ENCODE measurements at regions of chr11 and their contacts with region 1.

Region 1: GRCh38 chr11:62841361-62842184 is 2.2 kb upstream of the WDR74 start:
- DNase-seq: peak; percentile 99
- ATAC-seq: peak; percentile 79
- H3K4me3 ChIP-seq: peak overlapping the region in 1 of 2 experiments; percentile 15; a peak in 2 of 4 replicates
- H3K27ac ChIP-seq: peak overlapping the region; percentile 94
- H3K4me1 ChIP-seq: peaks cover 8 to 36% of the 10 kb centered on the region in 2 experiments; a peak in 3 of 4 replicates
- H3K27me3 ChIP-seq: no peaks in the 10 kb centered on the region
- CTCF ChIP-seq: no peak
- POLR2A ChIP-seq: peak; percentile 100
- RAD21 ChIP-seq: no peak

Region 2: GRCh38 chr11:62394825-62395538 is 446.6 kb before region 1 on chr11:
- CTCF ChIA-PET with region 1: interaction called, 11 read pairs
- POLR2A ChIA-PET with region 1: interaction called, 19 read pairs
- RAD21 ChIA-PET with region 1: no interaction called
- intact Hi-C with region 1: no loop called
- DNase-seq: peak; percentile 61
- ATAC-seq: peak; percentile 82
- H3K4me3 ChIP-seq: no peak overlapping the region; a peak in 1 of 4 replicates
- H3K27ac ChIP-seq: no peak overlapping the region
- H3K4me1 ChIP-seq: peaks cover 9 to 21% of the 10 kb centered on the region in 2 experiments; a peak in 3 of 4 replicates
- H3K27me3 ChIP-seq: no peaks in the 10 kb centered on the region
- CTCF ChIP-seq: peak; percentile 58 to 85 (median 81)
- POLR2A ChIP-seq: no peak
- RAD21 ChIP-seq: peak; percentile 95

Region 3: GRCh38 chr11:62671575-62672389 is 169.8 kb before region 1 on chr11 and contains the starts of genes LBHD1 and UQCC3:
- CTCF ChIA-PET with region 1: no interaction called
- POLR2A ChIA-PET with region 1: interaction called, 21 read pairs
- RAD21 ChIA-PET with region 1: no interaction called
- intact Hi-C with region 1: no loop called
- DNase-seq: peak; percentile 79
- ATAC-seq: peak; percentile 62
- H3K4me3 ChIP-seq: peak within 1 kb of the TSS; percentile 96 to 97
- H3K27ac ChIP-seq: peak within 1 kb of the TSS; percentile 98
- H3K4me1 ChIP-seq: peaks cover 35 to 59% of the 10 kb centered on the region in 2 experiments
- H3K27me3 ChIP-seq: no peaks in the 10 kb centered on the region
- CTCF ChIP-seq: no peak
- POLR2A ChIP-seq: peak; percentile 63
- RAD21 ChIP-seq: no peak
- total RNA-seq, gene LBHD1: 14.7 TPM
- total RNA-seq, gene UQCC3: 17.9 TPM

Region 4: DNA sequence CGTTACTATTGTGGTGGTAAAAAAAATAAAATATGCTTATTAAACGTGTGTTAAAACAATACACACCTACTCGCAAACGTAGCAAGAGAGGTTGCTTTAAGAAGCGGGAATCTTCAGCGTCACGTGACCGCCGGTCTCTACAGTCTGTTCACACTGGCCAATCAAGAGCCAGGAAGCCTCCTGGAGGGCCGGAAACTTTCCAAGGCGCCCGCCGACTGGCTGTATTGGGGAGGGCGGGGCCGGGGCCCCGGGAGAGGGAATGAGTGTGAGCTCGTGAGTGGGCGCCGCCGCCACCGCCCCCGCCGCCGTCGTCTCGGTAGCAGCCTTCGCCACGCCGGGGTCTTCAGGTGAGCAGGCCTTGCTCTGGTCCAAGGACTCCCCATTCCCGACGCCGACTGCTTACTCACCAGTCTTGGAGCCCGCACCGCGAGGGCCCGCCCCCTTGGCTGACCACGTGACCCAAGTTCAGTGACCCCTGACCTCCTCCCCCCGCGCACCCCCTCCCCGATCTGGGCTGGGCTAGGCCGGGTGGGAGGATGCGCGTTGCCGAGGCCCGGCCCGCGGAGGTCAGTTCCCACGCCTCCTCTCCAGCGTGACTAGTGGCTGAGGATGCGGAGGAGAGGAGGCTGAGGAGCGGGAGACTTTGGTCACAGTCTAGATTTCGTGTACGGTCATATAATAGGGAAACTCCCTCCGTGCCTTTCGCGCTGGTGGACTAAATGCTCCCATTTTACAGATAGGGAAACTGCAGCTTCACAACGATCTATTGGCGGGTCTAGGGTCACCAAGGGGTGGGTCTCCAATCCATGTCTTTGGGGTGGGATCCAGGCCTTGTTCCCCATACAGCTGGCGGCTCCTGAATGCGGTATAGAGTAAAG is 70.2 kb before region 1 on chr11 and contains the start of gene TAF6L:
- CTCF ChIA-PET with region 1: no interaction called
- POLR2A ChIA-PET with region 1: interaction called, 13 read pairs
- RAD21 ChIA-PET with region 1: no interaction called
- intact Hi-C with region 1: no loop called
- DNase-seq: peak; percentile 93
- ATAC-seq: peak; percentile 94
- H3K4me3 ChIP-seq: peak within 1 kb of the TSS; percentile 67 to 69
- H3K27ac ChIP-seq: peak within 1 kb of the TSS; percentile 74
- H3K4me1 ChIP-seq: peaks cover 7 to 24% of the 10 kb centered on the region in 2 experiments; a peak in 3 of 4 replicates
- H3K27me3 ChIP-seq: no peaks in the 10 kb centered on the region
- CTCF ChIP-seq: no peak
- POLR2A ChIP-seq: peak; percentile 7
- RAD21 ChIP-seq: no peak
- total RNA-seq, gene TAF6L: 24.2 TPM

Region 5: GRCh38 chr11:62816557-62816956 is 25.0 kb before region 1 on chr11:
- CTCF ChIA-PET with region 1: no interaction called
- POLR2A ChIA-PET with region 1: interaction called, 12 read pairs
- RAD21 ChIA-PET with region 1: no interaction called
- intact Hi-C with region 1: no loop called
- DNase-seq: no peak
- ATAC-seq: no peak
- H3K4me3 ChIP-seq: no peak overlapping the region
- H3K27ac ChIP-seq: no peak overlapping the region
- H3K4me1 ChIP-seq: no peaks in the 10 kb centered on the region
- H3K27me3 ChIP-seq: no peaks in the 10 kb centered on the region
- CTCF ChIP-seq: no peak
- POLR2A ChIP-seq: no peak
- RAD21 ChIP-seq: no peak

Region 6: GRCh38 chr11:62880803-62881578 is 39.4 kb after region 1 on chr11 and contains the start of gene SLC3A2:
- CTCF ChIA-PET with region 1: interaction called, 3 read pairs
- POLR2A ChIA-PET with region 1: interaction called, 50 read pairs
- RAD21 ChIA-PET with region 1: interaction called, 4 to 7 read pairs
- intact Hi-C with region 1: no loop called
- DNase-seq: peak; percentile 68
- ATAC-seq: peak; percentile 87
- H3K4me3 ChIP-seq: peak within 1 kb of the TSS; percentile 75 to 85
- H3K27ac ChIP-seq: peak within 1 kb of the TSS; percentile 96
- H3K4me1 ChIP-seq: peaks cover 38 to 74% of the 10 kb centered on the region in 2 experiments
- H3K27me3 ChIP-seq: no peaks in the 10 kb centered on the region
- CTCF ChIP-seq: peak in 2 of 3 experiments; percentile 47 to 52; a peak in 4 of 6 replicates
- POLR2A ChIP-seq: peak; percentile 98
- RAD21 ChIP-seq: no peak
- total RNA-seq, gene SLC3A2: 418 TPM

Measured in HCT116 (cell line).